HCT116 (cell line): ENCODE measurements at regions of chr7 and their contacts with region 1.

Region 1: DNA sequence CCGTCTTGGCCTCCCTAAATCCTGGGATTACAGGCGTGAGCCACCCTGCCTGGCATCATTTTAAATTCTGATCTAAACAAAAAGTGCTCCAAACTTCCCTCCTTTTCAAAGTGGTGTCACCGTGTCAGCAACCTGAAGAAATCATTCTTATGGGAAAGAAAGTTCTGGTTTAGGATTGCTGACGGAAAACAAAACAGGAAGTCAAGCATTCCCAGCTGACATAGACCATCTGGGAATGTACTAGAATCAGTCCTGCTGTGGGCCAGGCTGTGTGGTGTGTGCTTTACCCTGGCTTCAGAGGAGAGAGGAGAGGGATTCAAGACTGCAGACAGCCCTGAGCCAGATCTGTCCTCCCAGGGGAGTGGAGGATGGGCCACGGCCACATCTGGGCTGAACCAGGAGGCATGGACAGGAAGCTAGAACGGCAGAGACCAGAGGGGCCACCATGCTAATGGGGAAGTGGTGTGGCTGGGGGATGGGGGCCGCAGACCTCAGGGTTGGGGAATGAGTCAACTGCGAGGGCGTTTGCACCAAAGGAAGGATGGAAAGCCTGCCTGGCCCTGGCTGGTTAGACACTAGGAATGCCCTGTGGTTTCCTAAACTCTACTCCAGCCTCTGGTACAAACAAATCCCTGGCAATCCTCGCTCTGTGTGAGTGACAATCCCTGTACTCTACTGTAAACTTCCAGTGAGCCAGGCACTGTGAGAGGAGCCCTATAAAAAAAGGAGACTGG is 16.7 kb upstream of the CLIP2 start:
- DNase-seq: no peak
- ATAC-seq: no peak
- H3K4me3 ChIP-seq: no peak overlapping the region
- H3K27ac ChIP-seq: peak overlapping the region; percentile 36; the same call in 1 of the 2 replicates
- H3K4me1 ChIP-seq: peaks cover 11 to 39% of the 10 kb centered on the region in 2 experiments
- H3K27me3 ChIP-seq: no peaks in the 10 kb centered on the region
- CTCF ChIP-seq: no peak
- POLR2A ChIP-seq: no peak
- RAD21 ChIP-seq: no peak

Region 2: GRCh38 chr7:74289018-74289658 is 16.7 kb after region 1 on chr7 and contains the start of gene CLIP2:
- CTCF ChIA-PET with region 1: interaction called, 24 read pairs
- POLR2A ChIA-PET with region 1: interaction called, 9 read pairs
- RAD21 ChIA-PET with region 1: interaction called in 1 of 2 experiments, 4 read pairs
- intact Hi-C with region 1: loop called (anchors 1 kb)
- DNase-seq: peak; percentile 54
- ATAC-seq: peak; percentile 75
- H3K4me3 ChIP-seq: peak within 1 kb of the TSS; percentile 80 to 85
- H3K27ac ChIP-seq: peak within 1 kb of the TSS; percentile 84
- H3K4me1 ChIP-seq: peaks cover 50 to 78% of the 10 kb centered on the region in 2 experiments
- H3K27me3 ChIP-seq: no peaks in the 10 kb centered on the region
- CTCF ChIP-seq: no peak
- POLR2A ChIP-seq: peak; percentile 25
- RAD21 ChIP-seq: no peak
- total RNA-seq, gene CLIP2: 40.1 TPM